ENCODE measurements at regions of chr9 and their contacts with region 1.

Region 1: DNA sequence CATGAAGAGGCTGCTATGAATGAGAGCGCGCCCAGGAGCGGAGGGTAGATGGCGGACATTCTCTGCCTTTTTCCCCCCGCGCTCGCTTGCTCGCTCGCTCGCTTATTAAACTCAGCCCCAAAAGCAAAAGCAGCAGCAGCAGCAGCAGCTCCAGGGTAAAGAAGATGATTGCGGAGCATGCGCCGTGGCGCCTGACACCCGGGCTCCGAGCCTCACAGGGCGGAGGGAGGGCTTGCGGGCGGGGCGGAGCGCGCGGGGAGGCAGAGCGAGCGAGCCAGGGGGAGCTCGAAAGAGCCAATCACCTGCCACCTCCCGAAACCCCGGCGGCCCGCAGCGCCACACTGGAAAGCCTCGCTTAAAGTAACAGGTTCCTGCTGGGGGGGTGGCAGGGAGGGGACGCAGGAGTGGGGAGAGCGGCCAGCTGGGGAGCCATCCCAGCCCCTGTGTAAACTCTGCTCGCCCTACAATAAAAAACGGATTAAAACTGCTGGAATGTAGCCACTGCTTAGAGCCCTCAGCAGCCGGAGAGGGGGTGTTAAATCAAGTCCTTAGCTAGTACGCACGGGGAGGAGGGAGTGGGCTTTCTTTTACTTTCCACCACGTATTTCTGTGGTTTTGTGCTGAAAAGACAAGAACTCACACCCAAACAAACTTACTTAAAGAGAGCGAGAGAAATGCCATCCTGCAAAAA is at the start of gene MLLT3:
- DNase-seq: peak; percentile 72
- H3K4me3 ChIP-seq: peak within 1 kb of the TSS; percentile 81
- CTCF ChIP-seq: no peak

Region 2: GRCh38 chr9:20356403-20357035 is 266.0 kb before region 1 on chr9:
- CTCF ChIA-PET with region 1: interaction called, 11 read pairs
- POLR2A ChIA-PET with region 1: interaction called, 9 read pairs
- DNase-seq: peak; percentile 53
- H3K4me3 ChIP-seq: no peak overlapping the region
- CTCF ChIP-seq: peak; percentile 70

Region 3: GRCh38 chr9:20604562-20604961 is 17.9 kb before region 1 on chr9:
- CTCF ChIA-PET with region 1: interaction called, 12 read pairs
- POLR2A ChIA-PET with region 1: no interaction called
- DNase-seq: no peak
- H3K4me3 ChIP-seq: no peak overlapping the region
- CTCF ChIP-seq: no peak

Region 4: GRCh38 chr9:20636888-20637440 is 14.5 kb after region 1 on chr9:
- CTCF ChIA-PET with region 1: interaction called, 17 read pairs
- POLR2A ChIA-PET with region 1: no interaction called
- DNase-seq: no peak
- H3K4me3 ChIP-seq: no peak overlapping the region
- CTCF ChIP-seq: no peak

Region 5: DNA sequence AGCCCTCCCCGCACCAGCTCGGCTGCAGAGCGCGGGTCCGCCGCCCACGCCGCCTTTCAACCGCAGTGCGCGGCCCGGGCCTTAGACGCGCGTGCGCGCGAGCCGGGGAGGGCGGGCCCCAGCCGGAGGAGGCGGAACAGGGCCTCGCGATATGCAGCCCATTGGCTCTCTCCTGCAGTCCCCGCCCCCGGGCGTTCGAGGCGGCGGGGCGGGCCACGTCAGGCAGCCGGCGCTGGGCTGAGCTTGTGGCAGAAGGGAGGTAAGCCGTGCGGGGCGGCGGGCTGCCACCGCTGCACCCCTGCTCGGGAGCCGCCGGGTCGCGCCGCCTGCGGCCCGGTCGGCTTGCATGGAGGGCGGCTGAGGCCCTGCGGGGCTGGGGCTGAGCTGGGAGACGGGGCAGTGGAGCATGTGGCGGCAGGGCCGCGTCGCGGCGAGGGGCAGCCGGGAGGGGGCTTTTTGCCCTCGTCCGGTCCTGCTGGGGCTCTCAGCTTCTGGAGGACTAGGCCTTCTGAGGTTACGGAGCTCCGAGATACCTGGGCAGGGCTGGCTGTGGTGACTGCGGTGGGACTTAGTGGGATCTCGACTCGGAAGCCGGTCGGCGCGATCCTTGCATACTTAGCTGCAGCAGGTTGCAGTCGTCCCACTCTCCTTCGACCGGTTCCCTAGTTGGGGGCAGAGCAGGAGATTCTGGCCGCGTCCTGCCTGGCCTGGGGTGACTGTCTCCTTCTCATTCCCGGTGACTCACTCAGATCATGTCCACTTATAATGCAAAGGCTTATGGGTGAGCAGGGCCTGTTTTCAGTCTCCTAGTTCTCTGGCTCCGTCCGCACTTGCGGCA is 61.8 kb after region 1 on chr9 and contains the start of gene FOCAD:
- CTCF ChIA-PET with region 1: interaction called, 8 read pairs
- POLR2A ChIA-PET with region 1: interaction called, 11 read pairs
- DNase-seq: peak; percentile 42
- H3K4me3 ChIP-seq: peak within 1 kb of the TSS; percentile 80
- CTCF ChIP-seq: no peak

Region 6: DNA sequence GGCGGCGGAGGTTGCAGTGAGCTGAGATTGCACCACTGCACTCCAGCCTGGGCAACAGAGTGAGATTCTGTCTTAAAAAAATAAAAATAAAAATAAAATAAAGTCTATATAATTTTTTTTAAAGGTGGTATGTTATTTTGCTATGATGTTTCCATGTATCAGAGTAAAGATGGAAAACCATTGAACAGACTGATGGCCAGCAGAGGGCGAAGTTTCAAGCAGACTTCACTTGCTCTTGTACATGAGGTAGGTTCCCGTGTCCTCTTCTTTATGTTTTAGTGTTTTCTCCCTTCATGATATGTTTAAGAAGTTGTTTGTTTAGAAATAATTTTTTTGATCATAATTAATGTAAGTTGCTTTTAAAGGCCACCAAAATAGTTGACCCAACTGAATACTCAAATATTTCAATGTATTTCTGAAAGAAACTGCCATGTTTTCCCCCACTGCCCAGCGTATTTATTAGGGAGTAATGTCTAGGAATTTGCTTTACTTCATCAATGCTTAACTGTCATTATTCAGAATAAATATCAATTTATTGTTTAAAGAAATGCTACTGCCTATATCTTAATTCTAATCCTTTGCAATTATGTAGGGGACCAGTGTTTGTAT is 262.6 kb after region 1 on chr9:
- CTCF ChIA-PET with region 1: interaction called, 12 read pairs
- POLR2A ChIA-PET with region 1: no interaction called
- DNase-seq: no peak
- H3K4me3 ChIP-seq: no peak overlapping the region
- CTCF ChIP-seq: peak; percentile 61

Region 7: GRCh38 chr9:21110708-21111576 is 488.5 kb after region 1 on chr9:
- CTCF ChIA-PET with region 1: interaction called, 62 read pairs
- POLR2A ChIA-PET with region 1: no interaction called
- DNase-seq: peak; percentile 37
- H3K4me3 ChIP-seq: no peak overlapping the region
- CTCF ChIP-seq: peak; percentile 73

Measured in AG04449 (cell line).